ENCODE measurements at regions of chr11 and their contacts with region 1.

Region 1: GRCh38 chr11:84790849-84791427 is 836.2 kb downstream of the DLG2 start:
- DNase-seq: no peak
- H3K4me3 ChIP-seq: no peak overlapping the region
- H3K27ac ChIP-seq: no peak overlapping the region
- H3K4me1 ChIP-seq: no peaks in the 10 kb centered on the region
- H3K27me3 ChIP-seq: 0 out of 2 replicates have a peak, but pooled peaks cover 3% of the 10 kb centered on the region

Region 2: DNA sequence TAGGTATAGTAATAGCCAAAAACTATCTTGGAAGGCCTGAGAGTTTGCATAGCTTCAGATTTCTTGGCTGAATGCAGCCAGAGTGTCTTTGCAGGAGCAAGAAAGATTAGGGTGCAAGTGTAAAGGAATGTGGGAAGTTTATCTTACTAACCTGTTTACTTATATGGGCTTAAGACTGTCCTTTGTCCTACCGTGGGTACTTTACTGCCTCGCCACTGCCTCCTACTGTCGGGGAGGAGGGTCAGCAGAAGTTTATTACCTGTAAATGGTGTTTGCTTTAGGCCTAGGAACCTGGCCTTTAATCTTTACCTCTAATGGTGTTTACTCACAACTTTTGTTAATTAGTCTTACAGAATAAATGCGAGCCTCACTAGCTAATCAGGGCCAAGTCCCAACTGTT is 202.4 kb after region 1 on chr11:
- in situ Hi-C with region 1: loop called (anchors 10 kb)
- DNase-seq: peak; percentile 41
- H3K4me3 ChIP-seq: no peak overlapping the region
- H3K27ac ChIP-seq: no peak overlapping the region
- H3K4me1 ChIP-seq: no peaks in the 10 kb centered on the region
- H3K27me3 ChIP-seq: no peaks in the 10 kb centered on the region